Heart left ventricle (tissue), 16 donors: ENCODE measurements at regions of chr2 and their contacts with region 1.

Region 1: DNA sequence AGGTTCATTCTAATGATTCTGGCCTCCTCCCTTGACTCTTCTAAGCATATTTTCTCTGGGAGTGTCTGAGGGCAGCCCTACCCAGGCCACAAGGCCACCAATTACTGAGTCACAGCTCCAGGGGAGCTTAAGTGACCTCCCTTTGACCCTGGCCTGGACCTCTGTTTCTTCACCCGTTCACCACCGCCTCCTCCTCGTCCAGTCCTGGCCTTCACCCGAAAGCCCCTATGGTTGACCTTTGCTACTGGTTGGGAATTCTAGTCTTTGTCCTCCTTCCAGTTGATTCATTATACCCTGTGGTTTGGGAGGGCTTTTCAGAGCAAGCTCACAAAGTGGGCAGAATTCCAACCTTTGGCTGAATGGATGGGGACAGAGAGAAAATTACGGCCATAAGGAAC is 72.6 kb downstream of the NRP2 start:
- DNase-seq: no peak
- ATAC-seq: peak in 2 of 4 donors; percentile 10 to 44
- H3K4me3 ChIP-seq: no peak overlapping the region
- H3K27ac ChIP-seq: peak overlapping the region in 8 of 12 donors; percentile 10 to 82 (median 58)
- H3K4me1 ChIP-seq: peaks cover 0 to 54% (median 12%) of the 10 kb centered on the region in 12 donors
- H3K27me3 ChIP-seq: no peaks in the 10 kb centered on the region
- CTCF ChIP-seq: no peak
- POLR2A ChIP-seq: no peak

Region 2: GRCh38 chr2:205685314-205686055 is 69.4 kb before region 1 on chr2:
- intact Hi-C with region 1: loop called in 6 of 10 experiments (anchors 5 to 10 kb)
- DNase-seq: no peak
- ATAC-seq: peak in 2 of 4 donors; percentile 35 to 48
- H3K4me3 ChIP-seq: peak overlapping the region; percentile 32 to 79 (median 63)
- H3K27ac ChIP-seq: peak overlapping the region in 9 of 12 donors; percentile 12 to 93 (median 58)
- H3K4me1 ChIP-seq: peaks cover 0 to 69% (median 31%) of the 10 kb centered on the region in 12 donors
- H3K27me3 ChIP-seq: peaks cover 0 to 43% (median 7%) of the 10 kb centered on the region in 9 donors
- CTCF ChIP-seq: peak in 1 of 12 donors; percentile 6
- POLR2A ChIP-seq: no peak

Region 3: GRCh38 chr2:205706769-205707381 is 48.0 kb before region 1 on chr2:
- intact Hi-C with region 1: loop called in 2 of 10 experiments (anchors 5 kb)
- DNase-seq: peak; percentile 68 to 83 (median 80)
- ATAC-seq: peak; percentile 51 to 90 (median 88)
- H3K4me3 ChIP-seq: peak overlapping the region in 1 of 12 donors; percentile 5
- H3K27ac ChIP-seq: peak overlapping the region in 11 of 12 donors; percentile 51 to 93 (median 79)
- H3K4me1 ChIP-seq: peaks cover 0 to 78% (median 65%) of the 10 kb centered on the region in 12 donors
- H3K27me3 ChIP-seq: no peaks in the 10 kb centered on the region
- CTCF ChIP-seq: no peak
- POLR2A ChIP-seq: no peak

Region 4: DNA sequence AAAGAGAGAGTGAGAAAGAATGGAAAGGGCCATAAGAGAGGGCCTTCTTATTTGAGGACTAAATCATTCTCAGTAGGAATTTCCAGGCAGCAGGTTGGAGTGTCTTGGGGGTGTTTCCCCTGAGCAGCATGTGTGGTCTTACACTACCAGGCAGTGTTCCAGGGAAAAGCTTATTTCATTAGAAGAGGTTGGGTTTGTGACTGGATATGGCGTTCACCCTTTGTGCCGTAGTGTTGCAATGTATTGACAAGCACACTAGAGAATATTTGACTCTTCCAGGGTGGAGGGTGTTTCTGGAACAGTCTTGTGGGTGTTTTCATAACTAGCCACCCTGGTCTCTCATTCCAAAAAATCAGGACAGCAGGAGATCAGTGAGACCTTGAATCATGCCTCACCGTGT is 32.8 kb after region 1 on chr2:
- intact Hi-C with region 1: no loop called
- DNase-seq: no peak
- ATAC-seq: no peak
- H3K4me3 ChIP-seq: no peak overlapping the region
- H3K27ac ChIP-seq: peak overlapping the region in 1 of 12 donors; percentile 85
- H3K4me1 ChIP-seq: peaks cover 0 to 5% (median 0%) of the 10 kb centered on the region in 12 donors
- H3K27me3 ChIP-seq: no peaks in the 10 kb centered on the region
- CTCF ChIP-seq: no peak
- POLR2A ChIP-seq: no peak

Region 5: DNA sequence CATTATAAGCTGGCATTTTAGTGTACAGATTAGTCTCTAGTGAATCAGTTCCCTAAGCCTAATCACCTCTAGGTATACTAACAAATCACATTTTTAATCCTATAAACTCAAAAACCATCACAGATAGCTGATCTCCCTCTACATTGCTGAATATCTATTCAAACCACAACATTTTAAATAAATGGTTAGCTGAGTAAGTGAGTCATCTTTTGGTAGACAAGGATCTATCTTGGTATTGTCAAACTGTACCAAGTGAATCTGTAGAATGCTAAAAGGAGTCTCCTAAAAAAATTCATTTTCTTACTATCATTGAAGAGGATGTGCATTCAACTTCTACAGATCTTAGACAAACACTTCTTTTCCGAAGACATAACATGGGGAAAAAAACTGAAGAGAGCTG is 290.3 kb after region 1 on chr2:
- intact Hi-C with region 1: no loop called
- DNase-seq: no peak
- ATAC-seq: no peak
- H3K4me3 ChIP-seq: no peak overlapping the region
- H3K27ac ChIP-seq: no peak overlapping the region
- H3K4me1 ChIP-seq: peaks cover 0 to 8% (median 0%) of the 10 kb centered on the region in 12 donors
- H3K27me3 ChIP-seq: no peaks in the 10 kb centered on the region
- CTCF ChIP-seq: no peak
- POLR2A ChIP-seq: no peak